Prostate gland (tissue), 2 donors: ENCODE measurements at regions of chr18 and their contacts with region 1.

Region 1: DNA sequence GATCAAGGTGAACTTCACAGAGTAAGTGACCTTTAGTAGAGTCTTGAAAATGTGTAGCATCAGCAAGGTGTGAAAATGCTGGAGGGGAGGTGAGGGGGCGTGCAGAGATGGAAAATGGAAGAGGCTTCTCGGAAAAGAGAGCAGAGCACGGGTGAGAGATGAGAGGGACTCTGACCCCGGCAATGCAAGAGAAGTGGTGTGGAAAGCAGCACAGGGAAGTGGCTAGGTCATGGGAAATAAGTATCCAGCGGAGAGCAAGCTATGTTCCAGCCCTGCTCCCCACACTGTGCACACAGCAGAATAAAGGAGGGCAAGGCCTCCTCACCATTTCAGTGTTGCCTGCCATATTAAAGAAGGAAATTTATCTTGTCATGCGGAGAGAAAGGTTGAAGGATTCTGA is 241.7 kb upstream of the DOK6 start:
- DNase-seq: no peak
- H3K4me3 ChIP-seq: no peak overlapping the region
- H3K27ac ChIP-seq: no peak overlapping the region
- H3K4me1 ChIP-seq: no peaks in the 10 kb centered on the region
- H3K27me3 ChIP-seq: no peaks in the 10 kb centered on the region
- CTCF ChIP-seq: no peak
- POLR2A ChIP-seq: no peak

Region 2: DNA sequence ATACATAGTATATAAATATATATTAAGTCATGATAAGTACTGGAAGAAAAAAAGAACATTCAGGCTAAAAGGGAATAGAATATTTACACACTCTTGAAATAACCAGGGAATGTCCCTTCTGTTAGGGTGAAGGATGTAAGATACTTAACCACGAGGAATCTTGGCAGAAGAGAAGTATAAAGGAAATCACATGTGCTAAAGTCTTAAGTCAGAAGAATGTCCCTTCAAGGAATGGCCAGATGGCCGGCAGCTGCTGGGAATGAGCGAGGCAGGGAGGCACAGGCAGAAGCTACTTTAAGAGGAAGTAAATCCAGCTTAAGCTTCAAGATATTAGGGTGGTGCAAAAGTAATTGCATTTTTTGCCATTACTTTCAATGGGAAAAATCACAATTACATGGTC is 355.6 kb before region 1 on chr18:
- intact Hi-C with region 1: loop called (anchors 5 kb)
- DNase-seq: no peak
- H3K4me3 ChIP-seq: no peak overlapping the region
- H3K27ac ChIP-seq: no peak overlapping the region
- H3K4me1 ChIP-seq: no peaks in the 10 kb centered on the region
- H3K27me3 ChIP-seq: no peaks in the 10 kb centered on the region
- CTCF ChIP-seq: no peak
- POLR2A ChIP-seq: no peak

Region 3: DNA sequence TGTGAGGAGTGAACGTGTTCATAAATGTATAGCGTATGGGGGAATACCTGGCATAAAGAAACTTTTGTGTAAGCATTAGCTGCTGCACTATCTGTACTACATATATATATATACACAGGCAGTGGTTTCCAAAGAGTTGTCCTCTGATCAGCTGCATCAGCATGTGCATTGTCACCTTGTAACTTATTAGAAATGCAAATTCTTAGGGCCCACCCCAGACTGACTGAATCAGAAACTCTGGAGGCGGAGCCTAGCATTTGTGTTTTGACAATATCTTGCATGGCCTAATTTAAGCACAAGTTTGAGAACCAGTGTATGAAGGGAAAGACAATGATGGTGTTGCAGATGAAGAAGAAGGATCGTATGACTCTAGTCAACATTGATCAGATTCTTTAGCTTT is 61.6 kb before region 1 on chr18:
- intact Hi-C with region 1: no loop called
- DNase-seq: no peak
- H3K4me3 ChIP-seq: no peak overlapping the region
- H3K27ac ChIP-seq: no peak overlapping the region
- H3K4me1 ChIP-seq: no peaks in the 10 kb centered on the region
- H3K27me3 ChIP-seq: no peaks in the 10 kb centered on the region
- CTCF ChIP-seq: no peak
- POLR2A ChIP-seq: no peak